CD4-positive, alpha-beta memory T cell (primary cell): ENCODE measurements at regions of chr17 and their contacts with region 1.

Region 1: GRCh38 chr17:45307290-45308015 is 9.4 kb downstream of the MAP3K14 start:
- DNase-seq: peak in 3 of 5 donors; percentile 29 to 69 (median 35)
- H3K4me3 ChIP-seq: no peak overlapping the region
- H3K4me3 Mint-ChIP-seq: peak overlapping the region in 7 of 8 donors; percentile 21 to 68 (median 57)
- H3K27ac ChIP-seq: peak overlapping the region; percentile 43
- H3K27ac Mint-ChIP-seq: peak overlapping the region; percentile 66 to 91 (median 86)
- H3K4me1 ChIP-seq: peaks cover 94% of the 10 kb centered on the region
- H3K4me1 Mint-ChIP-seq: peaks cover 58 to 91% (median 73%) of the 10 kb centered on the region in 4 donors
- H3K27me3 ChIP-seq: no peaks in the 10 kb centered on the region
- H3K27me3 Mint-ChIP-seq: no peaks in the 10 kb centered on the region

Region 2: DNA sequence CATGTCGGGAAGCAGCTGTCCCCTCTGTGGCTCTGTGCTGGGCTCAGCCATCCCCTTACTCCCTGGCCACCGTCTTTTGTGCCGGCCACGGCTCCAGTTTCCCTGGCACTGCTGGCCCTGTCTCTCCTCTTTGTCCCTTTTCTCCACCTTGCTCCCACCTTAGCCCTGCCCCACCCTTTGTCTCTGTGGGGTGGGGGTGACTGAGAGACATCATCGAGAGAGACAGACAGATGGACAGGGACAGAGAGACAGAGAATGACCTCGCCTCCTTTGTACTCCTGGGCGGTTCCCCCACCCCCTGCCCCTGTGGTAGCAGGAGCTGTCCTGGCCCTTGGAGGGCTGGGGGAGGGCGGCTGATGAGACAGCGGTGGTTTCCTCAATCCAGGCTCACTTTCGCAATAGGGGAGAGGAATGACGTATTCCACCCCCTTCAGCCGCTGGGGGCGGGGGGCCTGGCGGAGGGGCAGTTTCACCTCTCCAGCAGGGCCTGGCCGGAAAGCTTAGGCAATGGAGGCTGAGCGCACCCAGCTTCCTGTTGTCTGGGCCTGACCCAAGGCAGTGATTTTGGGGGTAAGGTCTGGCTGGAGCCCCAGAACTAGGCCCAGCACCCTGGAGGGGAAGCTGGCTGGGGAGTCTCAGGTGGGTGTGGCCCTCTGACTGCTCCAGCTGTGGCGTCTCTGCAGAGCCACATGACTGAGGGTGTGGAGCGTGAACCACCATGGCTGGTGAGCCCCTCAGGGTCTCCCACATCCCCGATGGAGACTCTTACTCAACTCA is 78.5 kb before region 1 on chr17:
- CTCF ChIA-PET with region 1: interaction called, 15 read pairs
- POLR2A ChIA-PET with region 1: interaction called, 324 read pairs
- intact Hi-C with region 1: loop called (anchors 2 kb)
- DNase-seq: peak; percentile 78 to 97 (median 84)
- H3K4me3 ChIP-seq: peak overlapping the region; percentile 43 to 74
- H3K4me3 Mint-ChIP-seq: peak overlapping the region; percentile 96 to 100 (median 99)
- H3K27ac ChIP-seq: peak overlapping the region; percentile 97
- H3K27ac Mint-ChIP-seq: peak overlapping the region; percentile 99 to 100 (median 100)
- H3K4me1 ChIP-seq: peaks cover 95% of the 10 kb centered on the region
- H3K4me1 Mint-ChIP-seq: peaks cover 48 to 99% (median 69%) of the 10 kb centered on the region in 4 donors
- H3K27me3 ChIP-seq: no peaks in the 10 kb centered on the region
- H3K27me3 Mint-ChIP-seq: no peaks in the 10 kb centered on the region

Region 3: GRCh38 chr17:45296003-45296832 is 11.2 kb before region 1 on chr17:
- CTCF ChIA-PET with region 1: interaction called, 6 read pairs
- POLR2A ChIA-PET with region 1: interaction called, 69 read pairs
- intact Hi-C with region 1: loop called (anchors 2 kb)
- DNase-seq: no peak
- H3K4me3 ChIP-seq: no peak overlapping the region
- H3K4me3 Mint-ChIP-seq: peak overlapping the region in 4 of 8 donors; percentile 2 to 65 (median 46)
- H3K27ac ChIP-seq: no peak overlapping the region
- H3K27ac Mint-ChIP-seq: peak overlapping the region; percentile 30 to 93 (median 73)
- H3K4me1 ChIP-seq: peaks cover 89% of the 10 kb centered on the region
- H3K4me1 Mint-ChIP-seq: peaks cover 57 to 93% (median 71%) of the 10 kb centered on the region in 4 donors
- H3K27me3 ChIP-seq: no peaks in the 10 kb centered on the region
- H3K27me3 Mint-ChIP-seq: no peaks in the 10 kb centered on the region